GM10248 (cell line): ENCODE measurements at regions of chr16 and their contacts with region 1.

Region 1: DNA sequence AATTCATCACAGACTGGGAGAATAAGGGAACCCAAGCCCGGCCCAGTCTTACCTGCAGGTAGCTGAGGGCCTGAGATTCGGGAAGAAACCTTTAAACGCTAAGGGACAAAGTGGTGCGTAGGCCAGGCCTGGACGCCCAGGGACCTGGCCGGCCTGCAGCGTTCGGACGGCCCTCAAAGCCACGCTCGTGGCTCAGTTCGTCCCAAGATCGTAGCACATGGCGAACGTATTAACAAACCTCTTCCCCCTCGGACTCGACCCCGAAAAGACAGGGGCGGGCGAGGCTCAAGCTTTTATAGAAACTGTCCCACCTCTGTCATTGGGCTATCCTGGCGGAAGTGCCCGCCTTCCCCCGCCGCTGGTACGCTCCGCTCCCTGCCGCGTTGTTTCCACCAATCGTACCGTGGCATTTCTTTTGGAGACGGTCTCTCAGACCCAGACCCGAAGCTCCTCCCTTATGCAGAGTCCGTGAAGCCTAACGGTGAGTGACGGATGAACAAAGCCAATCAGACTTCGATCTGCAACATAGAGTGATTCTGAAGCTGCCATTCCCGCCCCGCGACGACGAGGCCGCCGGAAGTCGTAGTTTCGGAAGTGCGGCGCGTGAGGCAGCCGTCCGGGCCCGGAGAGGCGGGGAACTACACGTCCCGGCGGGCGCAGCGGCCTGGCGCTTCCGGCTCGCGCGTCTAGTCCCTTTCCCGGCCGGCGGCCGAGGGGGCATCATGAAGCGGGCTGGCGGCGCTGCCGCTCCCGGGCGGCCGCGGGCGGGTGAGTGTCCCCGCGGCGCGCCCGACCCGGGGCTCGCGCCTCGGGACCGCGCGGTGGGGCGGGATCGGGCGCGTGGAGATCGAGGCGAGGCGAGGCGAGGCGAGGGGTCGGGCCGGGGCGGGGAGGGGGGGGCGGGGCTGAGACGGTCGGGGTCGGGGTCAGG is at the start of gene TRAF7:
- DNase-seq: peak; percentile 99
- CTCF ChIP-seq: no peak

Region 2: DNA sequence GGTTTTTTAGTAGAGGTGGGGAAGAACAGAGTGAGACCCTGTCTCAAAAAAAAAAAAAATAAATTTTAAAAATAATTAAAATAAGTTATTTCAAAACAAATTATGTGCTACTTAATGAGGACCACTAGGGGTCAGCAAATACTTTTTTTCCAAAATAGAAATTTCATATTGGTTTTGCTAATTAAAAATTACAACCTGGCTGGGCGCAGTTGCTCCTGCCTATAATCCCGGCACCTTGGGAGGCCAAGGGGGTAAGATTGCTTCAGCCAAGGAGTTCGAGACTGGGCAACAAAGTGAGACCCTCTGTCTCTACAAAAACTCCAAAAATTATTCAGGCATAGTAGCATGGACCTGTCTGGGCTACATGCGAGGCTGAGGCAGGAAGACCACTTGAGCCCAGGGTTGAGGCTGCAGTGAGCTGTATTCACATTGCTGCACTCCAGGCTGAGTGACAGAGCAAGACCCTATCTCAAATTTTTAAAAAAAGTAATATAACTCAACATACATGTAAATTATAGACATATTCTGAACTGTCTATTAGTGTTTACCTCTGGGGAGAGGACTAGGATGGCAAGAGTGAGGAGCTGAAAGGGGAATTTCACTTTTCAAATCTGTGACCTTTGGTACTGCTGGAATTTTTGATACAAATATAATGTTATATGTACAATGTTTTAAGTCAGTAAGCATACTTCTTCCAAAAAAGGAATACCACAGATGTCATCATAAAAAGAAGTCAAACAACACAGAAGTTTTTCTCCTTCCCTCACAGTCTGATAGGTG is 291.5 kb before region 1 on chr16:
- CTCF ChIA-PET with region 1: no interaction called
- POLR2A ChIA-PET with region 1: no interaction called
- DNase-seq: no peak
- CTCF ChIP-seq: peak; percentile 30

Region 3: DNA sequence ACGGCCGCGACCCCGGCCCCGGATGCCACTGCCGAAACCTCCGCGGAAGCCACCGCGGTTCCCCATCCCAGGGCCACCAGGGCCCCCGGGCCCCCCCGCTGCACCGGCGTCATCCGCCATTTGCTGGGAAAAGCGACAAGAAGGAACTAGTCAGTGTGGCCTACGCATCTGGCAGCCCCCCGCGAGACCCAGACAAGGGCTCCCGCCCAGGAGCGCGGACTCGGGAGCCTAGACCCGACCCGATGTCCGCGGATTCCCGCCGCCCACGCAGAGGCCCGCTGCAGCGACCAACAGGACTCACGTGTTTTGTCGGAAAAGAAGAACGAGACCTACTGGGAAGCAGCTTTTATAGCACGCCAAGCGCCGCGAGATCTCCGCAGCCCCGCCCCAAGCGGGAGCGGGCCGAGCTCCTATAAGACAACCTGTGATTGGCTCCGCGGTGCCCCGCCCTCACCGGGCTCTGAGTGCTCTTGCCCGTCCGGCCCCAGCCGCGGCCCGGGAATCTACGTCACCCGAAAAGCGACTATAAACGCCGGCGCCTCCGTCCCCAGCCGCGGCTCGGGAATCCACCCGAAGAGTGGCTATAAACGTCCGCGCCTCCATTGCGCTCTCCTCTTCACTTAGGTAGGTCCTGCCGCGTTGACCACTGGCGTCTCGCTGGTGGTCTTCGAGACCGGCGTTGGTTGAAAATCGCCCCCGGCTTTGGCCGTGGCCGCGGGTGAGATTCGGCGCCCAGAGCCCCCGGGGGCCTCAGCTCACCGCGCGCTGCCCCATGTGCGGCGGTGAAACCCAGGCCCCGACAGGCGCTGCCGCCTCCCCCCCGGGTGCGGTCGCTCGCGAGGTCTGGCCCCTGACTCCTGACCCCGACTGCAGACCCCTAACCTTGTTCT is 190.6 kb before region 1 on chr16 and contains the start of gene RPS2:
- CTCF ChIA-PET with region 1: no interaction called
- POLR2A ChIA-PET with region 1: interaction called, 13 read pairs
- DNase-seq: peak; percentile 100
- CTCF ChIP-seq: no peak

Region 4: GRCh38 chr16:2009789-2010510 is 145.4 kb before region 1 on chr16 and contains the start of gene ZNF598:
- CTCF ChIA-PET with region 1: interaction called, 43 read pairs
- POLR2A ChIA-PET with region 1: interaction called, 13 read pairs
- DNase-seq: peak; percentile 97
- CTCF ChIP-seq: no peak

Region 5: GRCh38 chr16:2047330-2048115 is 107.8 kb before region 1 on chr16 and contains the starts of genes NTHL1 and TSC2:
- CTCF ChIA-PET with region 1: interaction called, 6 read pairs
- POLR2A ChIA-PET with region 1: interaction called, 12 read pairs
- DNase-seq: peak; percentile 98
- CTCF ChIP-seq: no peak

Region 6: DNA sequence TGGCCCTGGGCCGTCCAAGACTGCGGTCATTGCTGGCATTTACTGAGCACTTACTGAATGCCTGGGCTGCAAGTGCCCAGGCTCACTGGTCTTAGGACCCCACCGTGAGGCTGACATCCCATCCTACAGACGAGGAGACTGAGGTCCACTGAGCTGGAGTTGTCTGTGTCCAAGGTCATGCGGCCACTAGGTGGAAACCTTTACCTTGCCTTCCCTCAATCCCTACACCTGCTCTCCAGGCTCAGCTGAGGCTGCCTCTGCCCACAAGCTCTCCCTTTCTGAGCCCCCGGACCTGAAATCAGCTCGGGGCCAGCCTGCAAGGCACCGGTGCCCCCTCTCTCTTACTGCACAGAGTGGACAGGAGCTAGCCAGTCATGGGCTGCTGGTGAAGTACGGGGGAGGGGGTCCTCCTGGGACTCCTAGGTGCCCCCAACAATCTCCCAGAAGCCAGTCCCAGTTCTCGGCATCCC is 39.5 kb after region 1 on chr16:
- CTCF ChIA-PET with region 1: interaction called, 5 read pairs
- POLR2A ChIA-PET with region 1: interaction called, 14 read pairs
- DNase-seq: peak; percentile 75
- CTCF ChIP-seq: peak; percentile 55